ENCODE measurements at regions of chr11 and their contacts with region 1.

Region 1: DNA sequence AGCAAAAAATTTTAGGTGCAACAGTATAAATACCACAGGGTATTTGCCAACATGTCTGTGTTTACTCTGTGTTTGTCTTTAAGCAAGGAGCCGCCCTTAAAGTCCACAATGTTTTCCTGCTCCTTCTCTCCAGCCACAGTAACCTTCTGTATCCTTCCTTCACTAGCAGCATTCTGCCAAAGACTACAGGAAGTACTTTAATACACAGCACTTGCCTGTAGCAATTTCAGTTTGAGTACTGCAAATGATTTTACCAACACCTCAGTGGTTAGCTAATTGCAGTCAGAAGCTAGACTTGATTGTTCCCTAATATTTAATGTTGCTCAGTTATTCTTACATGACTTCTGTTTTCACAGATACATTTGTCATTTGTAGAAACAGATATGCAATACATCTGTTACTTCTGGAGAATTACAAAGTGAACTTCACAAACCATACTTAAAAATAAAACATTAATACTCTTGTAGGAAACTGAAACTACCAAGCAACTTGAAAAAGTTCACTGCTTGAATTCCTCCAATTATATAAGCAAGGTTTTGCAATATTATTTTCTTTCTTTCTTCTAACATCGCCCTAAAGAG is 69.1 kb downstream of the FCHSD2 start:
- DNase-seq: peak in 3 of 14 experiments; percentile 15 to 34 (median 18)
- ATAC-seq: no peak
- H3K4me3 ChIP-seq: no peak overlapping the region
- H3K4me3 Mint-ChIP-seq: no peak overlapping the region
- H3K27ac ChIP-seq: no peak overlapping the region
- H3K27ac Mint-ChIP-seq: peak overlapping the region; percentile 50
- H3K4me1 ChIP-seq: no peaks in the 10 kb centered on the region
- H3K4me1 Mint-ChIP-seq: peaks cover 45% of the 10 kb centered on the region
- H3K27me3 ChIP-seq: no peaks in the 10 kb centered on the region
- H3K27me3 Mint-ChIP-seq: no peaks in the 10 kb centered on the region
- CTCF ChIP-seq: no peak

Region 2: DNA sequence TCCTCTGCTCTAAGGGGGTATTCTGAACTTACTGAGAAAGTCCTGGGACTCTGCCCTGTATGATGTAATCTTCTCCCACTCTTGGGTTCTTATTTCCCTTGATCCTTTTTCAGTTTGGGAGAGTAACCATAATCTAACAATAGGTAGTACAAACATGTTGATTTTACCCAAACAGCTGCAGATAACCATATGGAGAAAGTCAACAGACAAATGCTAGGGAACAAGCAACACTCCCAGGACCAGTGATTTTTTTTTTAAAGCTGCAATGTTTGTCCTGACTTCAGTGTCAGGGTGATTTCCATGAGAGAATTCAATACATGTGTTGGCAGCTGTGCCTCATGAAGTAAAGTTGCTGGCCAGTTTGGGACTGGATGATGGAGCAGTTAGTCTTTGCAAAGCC is 87.3 kb before region 1 on chr11:
- CTCF ChIA-PET with region 1: no interaction called
- POLR2A ChIA-PET with region 1: no interaction called
- intact Hi-C with region 1: loop called in 1 of 2 experiments (anchors 10 kb)
- DNase-seq: no peak
- ATAC-seq: no peak
- H3K4me3 ChIP-seq: no peak overlapping the region
- H3K4me3 Mint-ChIP-seq: no peak overlapping the region
- H3K27ac ChIP-seq: no peak overlapping the region
- H3K27ac Mint-ChIP-seq: no peak overlapping the region
- H3K4me1 ChIP-seq: no peaks in the 10 kb centered on the region
- H3K4me1 Mint-ChIP-seq: peaks cover 12% of the 10 kb centered on the region
- H3K27me3 ChIP-seq: no peaks in the 10 kb centered on the region
- H3K27me3 Mint-ChIP-seq: no peaks in the 10 kb centered on the region
- CTCF ChIP-seq: no peak

Region 3: DNA sequence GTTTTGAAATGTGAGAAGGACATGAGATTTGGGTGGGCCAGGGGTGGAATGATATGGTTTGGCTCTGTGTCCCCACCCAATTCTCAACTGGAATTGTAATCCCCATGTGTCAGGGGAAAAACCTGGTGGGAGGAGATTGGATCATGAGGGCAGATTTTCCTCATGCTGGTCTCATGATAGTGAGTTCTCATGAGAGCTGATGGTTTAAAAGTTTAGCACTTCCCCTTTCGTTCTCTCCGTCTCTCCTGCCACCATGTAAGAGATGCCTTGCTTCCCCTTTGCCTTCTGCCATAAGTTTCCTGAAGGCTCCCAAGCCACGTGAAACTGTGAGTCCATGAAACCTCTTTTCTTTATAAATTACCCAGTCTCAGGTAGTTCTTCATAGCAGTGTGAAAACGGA is 44.4 kb before region 1 on chr11:
- CTCF ChIA-PET with region 1: no interaction called
- POLR2A ChIA-PET with region 1: no interaction called
- intact Hi-C with region 1: no loop called
- DNase-seq: peak in 2 of 14 experiments; percentile 47 to 61
- ATAC-seq: no peak
- H3K4me3 ChIP-seq: no peak overlapping the region
- H3K4me3 Mint-ChIP-seq: no peak overlapping the region
- H3K27ac ChIP-seq: no peak overlapping the region
- H3K27ac Mint-ChIP-seq: no peak overlapping the region
- H3K4me1 ChIP-seq: peaks cover 7% of the 10 kb centered on the region
- H3K4me1 Mint-ChIP-seq: peaks cover 41% of the 10 kb centered on the region
- H3K27me3 ChIP-seq: no peaks in the 10 kb centered on the region
- H3K27me3 Mint-ChIP-seq: no peaks in the 10 kb centered on the region
- CTCF ChIP-seq: no peak

Region 4: DNA sequence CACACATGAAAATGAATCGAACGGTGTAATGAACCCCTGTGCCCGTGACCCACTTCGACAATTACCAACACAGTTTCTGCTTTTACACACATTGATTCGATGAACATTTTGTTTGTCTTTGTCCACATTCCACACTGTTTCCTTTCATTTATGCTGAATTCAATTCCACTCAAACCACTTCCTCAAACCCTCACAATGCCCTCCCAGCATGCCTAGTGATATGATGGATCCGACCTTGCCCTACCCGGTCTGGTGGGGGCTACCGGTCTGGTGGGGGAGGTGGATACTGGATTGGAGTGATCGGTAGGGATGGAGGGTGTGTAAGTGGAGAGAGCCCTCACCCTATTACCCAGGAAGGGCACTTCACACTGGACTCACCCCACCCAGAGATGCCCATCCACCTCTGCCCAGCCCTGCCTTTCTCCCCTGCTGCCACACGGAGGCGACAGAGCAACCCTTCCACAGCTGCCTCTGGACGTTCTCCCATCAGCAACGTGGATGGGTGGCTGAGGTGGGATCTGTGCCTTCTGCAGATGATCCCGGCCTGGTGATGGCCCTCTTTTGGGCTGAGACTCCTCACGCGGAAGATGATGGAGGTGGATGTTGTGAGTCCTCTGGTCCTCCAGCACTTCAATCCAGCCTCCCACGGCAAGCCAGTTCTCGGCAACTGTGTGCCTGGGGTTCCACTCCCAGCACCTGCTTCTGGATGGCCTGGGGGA is 112.1 kb after region 1 on chr11:
- CTCF ChIA-PET with region 1: no interaction called
- POLR2A ChIA-PET with region 1: no interaction called
- intact Hi-C with region 1: no loop called
- DNase-seq: peak in 13 of 14 experiments; percentile 7 to 67 (median 31)
- ATAC-seq: peak; percentile 76
- H3K4me3 ChIP-seq: no peak overlapping the region
- H3K4me3 Mint-ChIP-seq: no peak overlapping the region
- H3K27ac ChIP-seq: no peak overlapping the region
- H3K27ac Mint-ChIP-seq: no peak overlapping the region
- H3K4me1 ChIP-seq: peaks cover 10% of the 10 kb centered on the region
- H3K4me1 Mint-ChIP-seq: no peaks in the 10 kb centered on the region
- H3K27me3 ChIP-seq: no peaks in the 10 kb centered on the region
- H3K27me3 Mint-ChIP-seq: peaks cover 4% of the 10 kb centered on the region
- CTCF ChIP-seq: peak; percentile 67

Measured in CD4-positive, alpha-beta T cell (primary cell).